CD8-positive, alpha-beta T cell (primary cell): ENCODE measurements at regions of chr9 and their contacts with region 1.

Region 1: DNA sequence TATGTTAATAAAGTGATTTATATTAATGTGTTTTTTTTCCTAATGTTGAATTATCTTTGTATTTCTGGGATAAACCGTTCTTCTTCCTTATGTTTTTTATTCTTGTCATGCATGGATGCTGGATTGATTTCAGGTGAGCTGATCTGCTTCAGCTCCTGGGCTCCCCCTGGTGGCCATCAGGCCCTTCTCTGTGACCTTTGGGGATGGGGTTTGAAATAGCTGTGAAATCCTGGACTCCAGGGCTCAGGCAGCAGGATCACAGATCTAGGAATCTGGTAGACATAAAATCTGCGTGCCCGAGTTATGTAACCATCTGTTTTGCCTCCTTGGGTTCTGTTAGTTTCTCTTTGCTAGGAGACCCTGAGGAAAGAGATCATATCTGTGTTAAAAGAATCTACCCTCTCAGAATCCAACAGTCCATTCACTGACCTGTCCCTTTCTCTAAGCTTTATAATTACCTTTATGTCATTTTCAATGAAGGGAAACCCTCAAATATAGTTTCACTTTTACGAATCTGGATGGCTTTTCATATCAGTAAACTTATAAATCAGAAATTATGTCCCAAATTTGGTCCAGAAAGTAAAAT is 12.2 kb upstream of the OR13J1 start:
- DNase-seq: peak; percentile 49 to 88 (median 80)
- ATAC-seq: peak; percentile 88
- H3K4me3 ChIP-seq: no peak overlapping the region
- H3K4me3 Mint-ChIP-seq: no peak overlapping the region
- H3K27ac ChIP-seq: no peak overlapping the region
- H3K27ac Mint-ChIP-seq: no peak overlapping the region
- H3K4me1 ChIP-seq: no peaks in the 10 kb centered on the region
- H3K4me1 Mint-ChIP-seq: no peaks in the 10 kb centered on the region
- H3K27me3 ChIP-seq: no peaks in the 10 kb centered on the region
- H3K27me3 Mint-ChIP-seq: peaks cover 4% of the 10 kb centered on the region
- CTCF ChIP-seq: peak; percentile 96

Region 2: GRCh38 chr9:35481347-35481975 is 400.9 kb before region 1 on chr9:
- CTCF ChIA-PET with region 1: no interaction called
- POLR2A ChIA-PET with region 1: no interaction called
- intact Hi-C with region 1: loop called in 1 of 2 experiments (anchors 5 kb)
- DNase-seq: peak in 2 of 9 experiments; percentile 13 to 26
- ATAC-seq: peak; percentile 40
- H3K4me3 ChIP-seq: no peak overlapping the region
- H3K4me3 Mint-ChIP-seq: no peak overlapping the region
- H3K27ac ChIP-seq: no peak overlapping the region
- H3K27ac Mint-ChIP-seq: no peak overlapping the region
- H3K4me1 ChIP-seq: no peaks in the 10 kb centered on the region
- H3K4me1 Mint-ChIP-seq: no peaks in the 10 kb centered on the region
- H3K27me3 ChIP-seq: peaks cover 2 to 6% of the 10 kb centered on the region in 2 experiments
- H3K27me3 Mint-ChIP-seq: peaks cover 5% of the 10 kb centered on the region
- CTCF ChIP-seq: peak; percentile 22

Region 3: GRCh38 chr9:35748858-35749514 is 133.4 kb before region 1 on chr9 and contains the starts of genes GBA2 and RGP1:
- CTCF ChIA-PET with region 1: interaction called, 10 read pairs
- POLR2A ChIA-PET with region 1: no interaction called
- intact Hi-C with region 1: no loop called
- DNase-seq: peak in 8 of 9 experiments; percentile 50 to 80 (median 66)
- ATAC-seq: peak; percentile 66
- H3K4me3 ChIP-seq: peak within 1 kb of the TSS; percentile 80 to 91
- H3K4me3 Mint-ChIP-seq: peak within 1 kb of the TSS; percentile 98
- H3K27ac ChIP-seq: peak within 1 kb of the TSS; percentile 68 to 86
- H3K27ac Mint-ChIP-seq: peak within 1 kb of the TSS; percentile 94
- H3K4me1 ChIP-seq: peaks cover 41% of the 10 kb centered on the region
- H3K4me1 Mint-ChIP-seq: peaks cover 50% of the 10 kb centered on the region
- H3K27me3 ChIP-seq: no peaks in the 10 kb centered on the region
- H3K27me3 Mint-ChIP-seq: no peaks in the 10 kb centered on the region
- CTCF ChIP-seq: no peak
- total RNA-seq, gene GBA2: 14.1 to 14.3 TPM
- total RNA-seq, gene RGP1: 9.6 to 10.4 TPM

Region 4: DNA sequence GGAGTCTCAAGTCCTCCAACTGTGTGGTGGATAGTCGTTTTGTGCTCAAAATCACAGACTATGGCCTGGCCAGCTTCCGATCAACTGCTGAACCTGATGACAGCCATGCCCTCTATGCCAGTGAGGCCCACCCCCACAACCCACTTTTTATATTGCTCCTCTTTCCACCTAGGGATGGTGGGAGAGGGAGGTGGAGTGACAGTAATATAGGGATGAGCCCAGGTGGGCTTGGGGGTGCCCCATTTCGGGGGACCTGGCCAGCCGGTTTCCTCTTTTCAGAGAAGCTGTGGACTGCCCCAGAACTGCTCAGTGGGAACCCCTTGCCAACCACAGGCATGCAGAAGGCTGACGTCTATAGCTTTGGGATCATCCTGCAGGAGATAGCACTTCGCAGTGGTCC is 76.8 kb before region 1 on chr9:
- CTCF ChIA-PET with region 1: interaction called, 10 read pairs
- POLR2A ChIA-PET with region 1: interaction called, 3 read pairs
- intact Hi-C with region 1: no loop called
- DNase-seq: no peak
- ATAC-seq: no peak
- H3K4me3 ChIP-seq: no peak overlapping the region
- H3K4me3 Mint-ChIP-seq: no peak overlapping the region
- H3K27ac ChIP-seq: no peak overlapping the region
- H3K27ac Mint-ChIP-seq: no peak overlapping the region
- H3K4me1 ChIP-seq: no peaks in the 10 kb centered on the region
- H3K4me1 Mint-ChIP-seq: peaks cover 4% of the 10 kb centered on the region
- H3K27me3 ChIP-seq: no peaks in the 10 kb centered on the region
- H3K27me3 Mint-ChIP-seq: no peaks in the 10 kb centered on the region
- CTCF ChIP-seq: no peak

Region 5: GRCh38 chr9:35829084-35829763 is 53.1 kb before region 1 on chr9 and contains the start of gene TMEM8B:
- CTCF ChIA-PET with region 1: interaction called, 33 read pairs
- POLR2A ChIA-PET with region 1: no interaction called
- intact Hi-C with region 1: loop called (anchors 1 kb)
- DNase-seq: peak; percentile 88 to 96 (median 94)
- ATAC-seq: peak; percentile 93
- H3K4me3 ChIP-seq: peak within 1 kb of the TSS; percentile 67 to 89
- H3K4me3 Mint-ChIP-seq: peak within 1 kb of the TSS; percentile 95
- H3K27ac ChIP-seq: peak within 1 kb of the TSS; percentile 64 to 71
- H3K27ac Mint-ChIP-seq: peak within 1 kb of the TSS; percentile 91
- H3K4me1 ChIP-seq: peaks cover 13% of the 10 kb centered on the region
- H3K4me1 Mint-ChIP-seq: peaks cover 41% of the 10 kb centered on the region
- H3K27me3 ChIP-seq: no peaks in the 10 kb centered on the region
- H3K27me3 Mint-ChIP-seq: no peaks in the 10 kb centered on the region
- CTCF ChIP-seq: no peak
- total RNA-seq, gene TMEM8B: 6.4 to 7.2 TPM

Region 6: GRCh38 chr9:35863583-35863982 is 18.8 kb before region 1 on chr9:
- CTCF ChIA-PET with region 1: interaction called, 10 read pairs
- POLR2A ChIA-PET with region 1: interaction called, 4 read pairs
- intact Hi-C with region 1: no loop called
- DNase-seq: no peak
- ATAC-seq: no peak
- H3K4me3 ChIP-seq: no peak overlapping the region
- H3K4me3 Mint-ChIP-seq: no peak overlapping the region
- H3K27ac ChIP-seq: no peak overlapping the region
- H3K27ac Mint-ChIP-seq: no peak overlapping the region
- H3K4me1 ChIP-seq: no peaks in the 10 kb centered on the region
- H3K4me1 Mint-ChIP-seq: peaks cover 1% of the 10 kb centered on the region
- H3K27me3 ChIP-seq: no peaks in the 10 kb centered on the region
- H3K27me3 Mint-ChIP-seq: peaks cover 37% of the 10 kb centered on the region
- CTCF ChIP-seq: no peak